ENCODE measurements at regions of chr1 and their contacts with region 1.

Region 1: GRCh38 chr1:25997828-25998761 is at the start of gene PAFAH2:
- DNase-seq: peak; percentile 90 to 99 (median 96)
- ATAC-seq: peak; percentile 96 to 98 (median 97)
- H3K4me3 ChIP-seq: peak within 1 kb of the TSS; percentile 63 to 66
- H3K4me3 Mint-ChIP-seq: peak within 1 kb of the TSS; percentile 91 to 97 (median 94)
- H3K27ac ChIP-seq: peak within 1 kb of the TSS; percentile 83
- H3K27ac Mint-ChIP-seq: peak within 1 kb of the TSS; percentile 99
- H3K4me1 ChIP-seq: peaks cover 10 to 31% of the 10 kb centered on the region in 2 experiments
- H3K4me1 Mint-ChIP-seq: peaks cover 35 to 39% (median 37%) of the 10 kb centered on the region in 3 donors
- H3K27me3 ChIP-seq: no peaks in the 10 kb centered on the region
- H3K27me3 Mint-ChIP-seq: no peaks in the 10 kb centered on the region
- total RNA-seq, gene PAFAH2: 10.2 to 30.2 (median 17.3) TPM

Region 2: GRCh38 chr1:25844536-25845337 is 153.4 kb before region 1 on chr1:
- CTCF ChIA-PET with region 1: interaction called in 1 of 2 experiments, 3 read pairs
- POLR2A ChIA-PET with region 1: interaction called in 1 of 2 experiments, 10 read pairs
- DNase-seq: no peak
- ATAC-seq: no peak
- H3K4me3 ChIP-seq: no peak overlapping the region
- H3K4me3 Mint-ChIP-seq: no peak overlapping the region
- H3K27ac ChIP-seq: no peak overlapping the region
- H3K27ac Mint-ChIP-seq: no peak overlapping the region
- H3K4me1 ChIP-seq: no peaks in the 10 kb centered on the region
- H3K4me1 Mint-ChIP-seq: no peaks in the 10 kb centered on the region
- H3K27me3 ChIP-seq: no peaks in the 10 kb centered on the region
- H3K27me3 Mint-ChIP-seq: no peaks in the 10 kb centered on the region

Measured in T-cell (primary cell).